ENCODE measurements at regions of chr6 and their contacts with region 1.

Region 1: GRCh38 chr6:141174932-141175331 is 957.8 kb upstream of the GJE1 start:
- DNase-seq: no peak
- H3K4me3 ChIP-seq: no peak overlapping the region
- H3K27ac ChIP-seq: no peak overlapping the region
- H3K4me1 ChIP-seq: no peaks in the 10 kb centered on the region
- H3K27me3 ChIP-seq: no peaks in the 10 kb centered on the region
- CTCF ChIP-seq: no peak
- POLR2A ChIP-seq: no peak

Region 2: GRCh38 chr6:141056945-141057625 is 117.8 kb before region 1 on chr6:
- intact Hi-C with region 1: no loop called
- DNase-seq: no peak
- H3K4me3 ChIP-seq: no peak overlapping the region
- H3K27ac ChIP-seq: no peak overlapping the region
- H3K4me1 ChIP-seq: no peaks in the 10 kb centered on the region
- H3K27me3 ChIP-seq: no peaks in the 10 kb centered on the region
- CTCF ChIP-seq: no peak
- POLR2A ChIP-seq: no peak

Region 3: DNA sequence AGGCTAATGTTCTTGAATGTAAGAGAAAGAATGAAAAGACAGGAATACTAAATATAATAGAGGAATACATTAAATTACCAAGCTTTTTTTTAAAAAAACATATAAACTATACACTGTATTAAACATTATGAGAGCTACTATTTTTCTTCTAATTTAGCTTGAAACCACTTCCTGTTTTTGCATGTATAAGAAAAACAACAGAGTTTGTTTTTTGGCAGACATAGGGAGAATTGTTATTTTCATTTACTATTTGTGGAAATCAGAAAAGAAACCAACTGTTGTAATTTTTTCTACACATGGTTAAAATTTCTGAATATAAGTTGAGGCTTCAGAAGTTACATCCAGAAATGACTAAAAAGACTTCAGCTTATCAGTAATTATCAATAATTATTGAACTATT is 34.0 kb before region 1 on chr6:
- intact Hi-C with region 1: no loop called
- DNase-seq: no peak
- H3K4me3 ChIP-seq: no peak overlapping the region
- H3K27ac ChIP-seq: no peak overlapping the region
- H3K4me1 ChIP-seq: no peaks in the 10 kb centered on the region
- H3K27me3 ChIP-seq: no peaks in the 10 kb centered on the region
- CTCF ChIP-seq: no peak
- POLR2A ChIP-seq: no peak

Region 4: GRCh38 chr6:141195251-141195832 is 20.4 kb after region 1 on chr6:
- intact Hi-C with region 1: loop called in 1 of 2 experiments (anchors 2 kb)
- DNase-seq: no peak
- H3K4me3 ChIP-seq: no peak overlapping the region
- H3K27ac ChIP-seq: no peak overlapping the region
- H3K4me1 ChIP-seq: no peaks in the 10 kb centered on the region
- H3K27me3 ChIP-seq: no peaks in the 10 kb centered on the region
- CTCF ChIP-seq: no peak
- POLR2A ChIP-seq: no peak

Region 5: DNA sequence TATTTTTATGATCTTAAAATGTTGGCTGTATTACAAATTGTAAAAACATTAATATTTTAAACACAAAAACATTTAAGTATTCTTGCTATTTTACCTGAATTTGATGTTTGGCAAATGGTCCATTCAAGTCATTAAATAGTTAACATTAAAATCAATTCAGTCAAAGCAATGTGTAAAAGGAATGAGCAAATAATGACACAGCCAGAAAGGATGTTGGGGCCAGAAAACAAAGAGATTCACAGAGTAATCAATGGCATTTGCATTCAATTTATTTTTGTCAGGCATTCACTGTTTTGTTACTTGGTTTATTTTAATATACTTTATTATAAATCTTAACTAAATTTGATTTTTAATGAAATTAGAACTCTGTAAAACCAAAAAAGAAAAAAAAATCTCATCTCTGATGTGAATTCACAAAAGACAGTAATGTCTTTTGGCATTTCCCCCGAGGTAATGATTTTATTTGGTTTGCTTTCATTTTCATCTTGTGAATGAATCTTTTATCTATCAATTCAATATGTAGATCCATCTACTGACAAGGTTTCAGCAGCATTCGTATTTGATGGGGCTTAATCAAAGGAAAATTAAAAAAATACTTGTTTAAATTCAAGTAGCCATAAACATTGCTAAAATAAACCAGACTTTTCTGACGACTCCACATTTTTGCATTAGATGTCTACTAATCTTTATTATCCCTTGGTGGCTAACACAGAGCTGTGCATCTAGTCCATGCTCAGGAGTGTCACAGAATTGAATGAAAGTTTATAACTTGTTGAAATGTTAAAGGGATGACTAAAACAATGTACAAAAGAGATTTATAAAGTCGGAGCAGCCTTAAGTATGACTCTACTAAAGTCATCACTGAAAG is 91.1 kb after region 1 on chr6:
- intact Hi-C with region 1: no loop called
- DNase-seq: no peak
- H3K4me3 ChIP-seq: peak overlapping the region in 1 of 4 donors; percentile 35
- H3K27ac ChIP-seq: no peak overlapping the region
- H3K4me1 ChIP-seq: no peaks in the 10 kb centered on the region
- H3K27me3 ChIP-seq: no peaks in the 10 kb centered on the region
- CTCF ChIP-seq: no peak
- POLR2A ChIP-seq: no peak

Region 6: GRCh38 chr6:142551274-142551811 is 1376.4 kb after region 1 on chr6:
- intact Hi-C with region 1: no loop called
- DNase-seq: no peak
- H3K4me3 ChIP-seq: no peak overlapping the region
- H3K27ac ChIP-seq: no peak overlapping the region
- H3K4me1 ChIP-seq: no peaks in the 10 kb centered on the region
- H3K27me3 ChIP-seq: no peaks in the 10 kb centered on the region
- CTCF ChIP-seq: no peak
- POLR2A ChIP-seq: no peak

Measured in adrenal gland (tissue), 19 donors.